Natural killer cell (primary cell): ENCODE measurements at regions of chr3 and their contacts with region 1.

Region 1: DNA sequence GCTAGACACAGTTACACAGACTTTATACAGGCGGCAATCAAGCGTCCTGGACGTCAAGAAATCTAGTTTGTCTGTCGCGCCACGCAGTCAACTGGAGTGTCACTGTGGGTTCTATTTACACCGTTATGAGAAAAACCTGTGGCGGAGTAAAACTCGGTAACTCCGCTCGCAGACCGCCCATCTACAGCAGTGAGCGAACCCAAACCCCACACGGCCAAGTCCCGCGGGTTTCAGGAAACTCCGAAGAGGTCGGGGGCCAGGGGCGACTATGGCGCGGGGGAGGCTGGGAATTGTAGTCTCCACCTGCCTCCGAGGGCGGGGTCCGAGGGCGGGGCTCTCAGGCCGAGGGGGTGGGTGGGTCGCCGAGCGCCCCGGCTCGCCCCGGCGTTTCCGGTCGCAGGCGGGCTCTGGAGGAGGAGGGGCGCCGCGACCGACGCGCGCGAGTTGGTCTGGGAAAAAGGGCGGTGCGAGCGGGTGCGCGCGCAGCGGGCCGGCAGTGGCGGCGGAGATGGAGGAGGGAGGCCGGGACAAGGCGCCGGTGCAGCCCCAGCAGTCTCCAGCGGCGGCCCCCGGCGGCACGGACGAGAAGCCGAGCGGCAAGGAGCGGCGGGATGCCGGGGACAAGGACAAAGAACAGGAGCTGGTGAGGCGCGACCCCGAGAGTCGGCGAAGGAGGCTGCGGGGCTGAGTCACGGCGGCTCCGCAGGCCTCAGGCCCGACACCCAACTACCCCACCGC is at the start of gene PSMD2:
- DNase-seq: peak; percentile 93 to 98
- ATAC-seq: peak; percentile 92 to 99 (median 96)
- H3K4me3 ChIP-seq: peak within 1 kb of the TSS; percentile 72
- H3K4me3 Mint-ChIP-seq: peak within 1 kb of the TSS; percentile 88
- H3K27ac ChIP-seq: peak within 1 kb of the TSS; percentile 80
- H3K27ac Mint-ChIP-seq: peak within 1 kb of the TSS; percentile 85 to 90
- H3K4me1 ChIP-seq: peaks cover 18% of the 10 kb centered on the region
- H3K4me1 Mint-ChIP-seq: peaks cover 9 to 22% of the 10 kb centered on the region in 2 donors
- H3K27me3 ChIP-seq: no peaks in the 10 kb centered on the region
- H3K27me3 Mint-ChIP-seq: no peaks in the 10 kb centered on the region
- CTCF ChIP-seq: no peak
- total RNA-seq, gene PSMD2: 218 to 237 (median 231) TPM

Region 2: GRCh38 chr3:184174646-184175492 is 124.1 kb before region 1 on chr3 and contains the start of gene AP2M1:
- intact Hi-C with region 1: loop called (anchors 1 kb)
- DNase-seq: peak; percentile 98
- ATAC-seq: peak; percentile 97 to 100 (median 97)
- H3K4me3 ChIP-seq: peak within 1 kb of the TSS; percentile 96
- H3K4me3 Mint-ChIP-seq: peak within 1 kb of the TSS; percentile 93
- H3K27ac ChIP-seq: peak within 1 kb of the TSS; percentile 71
- H3K27ac Mint-ChIP-seq: peak within 1 kb of the TSS; percentile 71 to 92
- H3K4me1 ChIP-seq: peaks cover 30% of the 10 kb centered on the region
- H3K4me1 Mint-ChIP-seq: peaks cover 25 to 40% of the 10 kb centered on the region in 2 donors
- H3K27me3 ChIP-seq: no peaks in the 10 kb centered on the region
- H3K27me3 Mint-ChIP-seq: no peaks in the 10 kb centered on the region
- CTCF ChIP-seq: no peak
- total RNA-seq, gene AP2M1: 157 to 188 (median 168) TPM

Region 3: DNA sequence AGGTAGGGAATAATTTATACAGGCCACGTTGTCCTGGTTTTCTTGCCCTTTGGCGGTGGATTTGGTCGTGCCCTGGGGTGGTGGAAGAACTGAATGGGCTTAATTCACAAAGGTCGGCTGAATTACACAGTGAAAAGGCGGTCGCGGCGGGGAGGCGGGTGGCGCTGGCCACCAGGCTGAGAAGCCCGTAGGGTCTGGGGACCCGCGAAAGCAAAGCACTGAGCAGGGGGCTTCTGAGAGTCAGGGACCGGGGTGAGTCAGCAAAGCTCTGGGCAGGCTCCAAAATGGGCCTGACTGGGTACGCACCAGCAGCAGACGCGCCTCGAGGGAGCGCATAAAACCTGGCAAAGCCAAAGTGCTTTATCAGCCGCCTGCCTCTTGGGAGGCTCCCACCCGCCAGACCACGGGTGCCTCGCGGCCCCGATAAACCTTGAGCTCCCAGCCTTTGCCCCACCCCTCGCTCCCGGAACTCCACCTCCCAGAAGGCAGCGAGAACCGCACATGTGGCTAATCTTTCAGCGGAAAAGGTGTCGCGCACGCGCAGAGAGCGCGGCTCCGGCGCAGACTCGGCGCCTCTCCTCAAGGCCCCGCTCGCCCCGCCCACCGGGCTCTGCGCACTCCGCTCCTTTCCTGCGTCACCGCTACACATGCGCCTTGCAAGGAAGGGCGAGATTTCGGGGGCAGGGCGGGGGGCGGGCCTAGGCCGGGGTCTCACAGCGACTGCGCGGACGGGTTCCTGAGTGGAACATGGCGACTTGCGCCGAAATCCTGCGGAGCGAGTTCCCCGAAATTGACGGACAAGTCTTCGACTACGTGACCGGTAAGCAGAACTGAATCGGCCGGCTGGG is 113.2 kb before region 1 on chr3 and contains the start of gene ABCF3:
- intact Hi-C with region 1: loop called (anchors 2 kb)
- DNase-seq: peak; percentile 99 to 100
- ATAC-seq: peak; percentile 94 to 97 (median 94)
- H3K4me3 ChIP-seq: peak within 1 kb of the TSS; percentile 81
- H3K4me3 Mint-ChIP-seq: peak within 1 kb of the TSS; percentile 97
- H3K27ac ChIP-seq: peak within 1 kb of the TSS; percentile 74
- H3K27ac Mint-ChIP-seq: peak within 1 kb of the TSS; percentile 86 to 96
- H3K4me1 ChIP-seq: peaks cover 28% of the 10 kb centered on the region
- H3K4me1 Mint-ChIP-seq: peaks cover 36 to 40% of the 10 kb centered on the region in 2 donors
- H3K27me3 ChIP-seq: no peaks in the 10 kb centered on the region
- H3K27me3 Mint-ChIP-seq: no peaks in the 10 kb centered on the region
- CTCF ChIP-seq: no peak
- total RNA-seq, gene ABCF3: 128 to 168 (median 157) TPM

Region 4: GRCh38 chr3:184314700-184315542 is 16.0 kb after region 1 on chr3:
- intact Hi-C with region 1: loop called (anchors 1 kb)
- DNase-seq: peak; percentile 74 to 83
- ATAC-seq: peak; percentile 69 to 82 (median 73)
- H3K4me3 ChIP-seq: peak overlapping the region; percentile 47
- H3K4me3 Mint-ChIP-seq: peak overlapping the region; percentile 88
- H3K27ac ChIP-seq: peak overlapping the region; percentile 89
- H3K27ac Mint-ChIP-seq: peak overlapping the region; percentile 82 to 91
- H3K4me1 ChIP-seq: peaks cover 35% of the 10 kb centered on the region
- H3K4me1 Mint-ChIP-seq: peaks cover 21 to 41% of the 10 kb centered on the region in 2 donors
- H3K27me3 ChIP-seq: no peaks in the 10 kb centered on the region
- H3K27me3 Mint-ChIP-seq: no peaks in the 10 kb centered on the region
- CTCF ChIP-seq: no peak

Region 5: GRCh38 chr3:184362668-184363540 is 64.0 kb after region 1 on chr3:
- intact Hi-C with region 1: loop called (anchors 1 kb)
- DNase-seq: peak; percentile 93 to 98
- ATAC-seq: peak; percentile 76 to 88 (median 83)
- H3K4me3 ChIP-seq: peak overlapping the region; percentile 57
- H3K4me3 Mint-ChIP-seq: peak overlapping the region; percentile 99
- H3K27ac ChIP-seq: peak overlapping the region; percentile 86
- H3K27ac Mint-ChIP-seq: peak overlapping the region; percentile 96 to 97
- H3K4me1 ChIP-seq: peaks cover 32% of the 10 kb centered on the region
- H3K4me1 Mint-ChIP-seq: peaks cover 19 to 43% of the 10 kb centered on the region in 2 donors
- H3K27me3 ChIP-seq: no peaks in the 10 kb centered on the region
- H3K27me3 Mint-ChIP-seq: peaks cover 0 to 3% of the 10 kb centered on the region in 2 donors
- CTCF ChIP-seq: peak; percentile 61

Region 6: DNA sequence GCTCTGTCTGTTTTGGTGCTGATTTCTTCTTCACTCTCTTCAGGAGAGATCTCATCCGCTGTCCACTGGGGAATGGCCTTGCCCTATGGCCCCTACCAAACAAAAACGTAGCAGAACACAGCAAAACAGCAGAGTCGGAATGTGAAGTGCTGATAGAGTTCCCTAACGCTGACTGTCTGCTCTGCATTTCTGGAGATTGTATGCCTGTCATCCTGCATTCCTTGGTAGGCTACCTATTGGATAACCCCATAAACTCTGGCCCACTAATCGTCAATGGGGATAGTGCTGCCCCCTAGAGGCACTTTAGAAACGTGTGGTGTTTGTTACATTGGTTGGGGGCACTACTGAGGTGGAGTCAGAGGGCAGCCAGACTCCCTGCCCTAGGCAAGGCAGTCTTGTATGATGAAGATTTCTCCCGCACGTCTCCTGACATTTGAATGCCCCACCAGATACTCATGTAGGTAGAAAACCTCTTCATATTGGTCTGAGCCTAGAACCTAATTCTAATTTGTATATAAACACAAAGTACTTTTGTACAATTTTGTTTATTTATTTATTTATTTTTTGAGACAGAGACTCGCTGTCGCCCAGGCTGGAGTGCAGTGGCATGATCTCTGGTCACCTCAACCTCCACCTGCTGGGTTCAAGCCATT is 428.6 kb after region 1 on chr3:
- intact Hi-C with region 1: no loop called
- DNase-seq: peak in 1 of 2 donors; percentile 79
- ATAC-seq: peak; percentile 65 to 81 (median 80)
- H3K4me3 ChIP-seq: no peak overlapping the region
- H3K4me3 Mint-ChIP-seq: no peak overlapping the region
- H3K27ac ChIP-seq: no peak overlapping the region
- H3K27ac Mint-ChIP-seq: no peak overlapping the region
- H3K4me1 ChIP-seq: no peaks in the 10 kb centered on the region
- H3K4me1 Mint-ChIP-seq: no peaks in the 10 kb centered on the region
- H3K27me3 ChIP-seq: no peaks in the 10 kb centered on the region
- H3K27me3 Mint-ChIP-seq: peaks cover 25 to 31% of the 10 kb centered on the region in 2 donors
- CTCF ChIP-seq: peak; percentile 70